GM13976 (cell line): ENCODE measurements at regions of chr14 and their contacts with region 1.

Region 1: GRCh38 chr14:73472185-73473114 is 14.1 kb upstream of the NUMB start:
- DNase-seq: peak; percentile 65
- CTCF ChIP-seq: peak; percentile 43

Region 2: DNA sequence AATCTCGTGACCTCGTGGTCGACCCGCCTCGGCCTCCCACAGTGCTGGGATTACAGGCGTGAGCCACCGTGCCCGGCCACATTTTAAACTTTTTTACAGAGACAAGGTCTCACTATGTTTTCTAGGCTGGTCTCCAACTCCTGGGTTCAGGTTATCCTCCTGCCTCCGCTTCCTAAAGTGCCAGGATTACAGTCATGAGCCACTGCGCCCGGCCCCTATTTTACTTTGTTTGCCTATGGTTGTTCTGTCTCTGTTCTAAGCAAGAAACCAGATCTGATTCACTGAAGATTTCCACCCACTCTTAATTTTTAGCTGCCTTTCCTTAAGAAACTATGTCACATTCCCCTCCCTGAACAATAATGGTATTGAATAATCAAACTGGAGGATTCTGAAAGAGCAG is 375.0 kb before region 1 on chr14:
- in situ Hi-C with region 1: no loop called
- DNase-seq: no peak
- CTCF ChIP-seq: no peak

Region 3: GRCh38 chr14:73173092-73173735 is 299.2 kb before region 1 on chr14:
- in situ Hi-C with region 1: loop called (anchors 5 kb)
- DNase-seq: peak; percentile 50
- CTCF ChIP-seq: peak; percentile 8